ENCODE measurements at regions of chr3 and their contacts with region 1.

Region 1: GRCh38 chr3:188052169-188053030 is 101.6 kb upstream of the LPP start:
- DNase-seq: no peak
- H3K4me3 ChIP-seq: peak overlapping the region in 1 of 4 donors; percentile 27
- H3K27ac ChIP-seq: peak overlapping the region; percentile 64 to 92 (median 78)
- H3K4me1 ChIP-seq: peaks cover 22 to 39% (median 24%) of the 10 kb centered on the region in 3 donors
- H3K27me3 ChIP-seq: peaks cover 0 to 22% (median 0%) of the 10 kb centered on the region in 4 donors
- CTCF ChIP-seq: peak in 5 of 6 experiments; percentile 26 to 49 (median 35)
- POLR2A ChIP-seq: peak in 1 of 4 donors; percentile 13

Region 2: DNA sequence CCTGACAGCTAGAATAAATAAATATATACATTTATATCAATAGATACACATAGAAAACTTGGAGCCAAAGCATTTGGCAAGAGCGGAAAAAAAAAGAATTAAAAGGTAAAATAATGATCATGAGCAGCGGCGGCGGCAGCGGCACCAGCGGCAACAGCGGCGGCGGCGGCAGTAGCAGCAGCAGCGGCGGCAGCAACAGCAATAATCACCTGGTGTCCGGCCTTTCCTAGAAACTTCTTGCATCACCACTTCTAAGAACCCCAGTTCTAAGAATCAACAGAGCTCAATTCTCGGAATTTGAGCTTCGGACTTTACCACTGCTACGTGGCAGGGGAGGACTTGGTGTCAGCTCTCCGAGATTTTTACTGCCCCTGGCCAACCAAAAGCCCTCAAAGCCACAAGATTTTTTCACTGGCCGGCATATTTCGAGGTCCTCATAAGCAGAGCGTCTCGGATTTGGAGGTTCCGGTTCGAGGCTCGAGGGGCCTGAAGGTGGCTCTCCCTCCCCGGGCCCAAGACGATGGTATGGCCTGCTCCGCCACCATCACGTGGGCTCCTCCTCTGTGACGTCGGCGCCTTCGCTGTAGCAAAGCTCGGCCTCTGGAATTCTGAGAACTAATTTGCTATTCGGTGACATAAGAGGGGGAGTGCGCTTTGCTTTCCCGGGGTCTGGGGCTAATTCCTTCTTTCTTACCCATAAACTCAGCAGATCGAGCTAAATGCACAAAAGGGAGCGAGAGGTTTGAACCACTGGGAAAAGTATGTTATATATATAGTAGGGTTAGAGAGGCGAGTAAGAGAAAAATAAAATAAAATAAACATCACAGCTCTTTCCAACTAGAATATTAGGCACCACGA is 307.0 kb before region 1 on chr3 and contains the start of gene BCL6:
- intact Hi-C with region 1: loop called (anchors 10 kb)
- DNase-seq: peak; percentile 69
- H3K4me3 ChIP-seq: peak within 1 kb of the TSS; percentile 69 to 82 (median 74)
- H3K27ac ChIP-seq: peak within 1 kb of the TSS; percentile 96 to 99 (median 98)
- H3K4me1 ChIP-seq: peaks cover 20 to 76% (median 36%) of the 10 kb centered on the region in 3 donors
- H3K27me3 ChIP-seq: no peaks in the 10 kb centered on the region
- CTCF ChIP-seq: peak in 2 of 6 experiments; percentile 4 to 34
- POLR2A ChIP-seq: peak in 3 of 4 donors; percentile 93 to 99 (median 98)
- total RNA-seq, gene BCL6: 30.8 to 94.4 (median 42.6) TPM

Measured in esophagus squamous epithelium (tissue), 5 donors.